ENCODE measurements at regions of chr2 and their contacts with region 1.

Region 1: DNA sequence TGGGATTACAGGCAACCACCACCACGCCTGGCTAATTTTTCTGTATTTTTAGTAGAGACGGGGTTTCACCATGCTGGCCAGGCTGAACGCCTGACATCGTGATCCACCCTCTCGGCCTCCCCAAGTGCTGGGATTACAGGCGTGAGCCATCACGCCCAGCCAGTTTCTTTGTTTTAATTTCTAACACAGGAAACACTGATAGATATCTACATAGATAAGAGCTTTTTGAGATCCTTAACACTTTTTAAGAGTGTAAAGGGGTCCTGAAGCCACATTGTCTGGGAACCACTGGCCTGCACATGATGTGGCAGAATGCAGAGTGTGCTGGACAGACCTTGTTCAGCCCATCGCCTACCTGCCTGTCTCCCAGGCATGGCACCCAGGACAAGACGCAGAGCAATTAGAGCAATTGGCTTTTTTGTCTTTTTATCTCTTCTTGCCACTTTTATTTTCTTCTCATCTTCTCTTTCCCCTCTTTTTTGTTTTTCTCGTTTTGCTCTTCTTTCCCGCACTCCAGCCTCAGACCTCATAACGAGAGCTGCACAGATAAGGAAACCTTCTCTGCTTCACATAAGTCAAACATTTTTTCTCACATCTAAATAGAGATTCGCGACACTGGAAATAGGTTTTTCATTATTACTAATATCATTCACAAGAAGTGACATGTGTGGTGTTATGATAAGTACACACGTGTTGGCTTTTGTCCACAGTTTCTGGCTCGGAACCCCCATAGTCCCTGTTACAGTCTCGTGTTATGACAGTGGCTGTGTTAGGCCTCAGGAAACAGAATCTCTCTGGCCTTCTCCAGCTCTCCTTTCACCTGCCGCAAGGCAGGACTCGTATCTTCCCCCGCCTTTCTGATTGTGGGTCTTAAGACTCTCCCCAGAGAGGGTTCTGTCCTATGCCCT is 25.2 kb upstream of the GPR55 start:
- DNase-seq: peak; percentile 58
- CTCF ChIP-seq: no peak

Region 2: DNA sequence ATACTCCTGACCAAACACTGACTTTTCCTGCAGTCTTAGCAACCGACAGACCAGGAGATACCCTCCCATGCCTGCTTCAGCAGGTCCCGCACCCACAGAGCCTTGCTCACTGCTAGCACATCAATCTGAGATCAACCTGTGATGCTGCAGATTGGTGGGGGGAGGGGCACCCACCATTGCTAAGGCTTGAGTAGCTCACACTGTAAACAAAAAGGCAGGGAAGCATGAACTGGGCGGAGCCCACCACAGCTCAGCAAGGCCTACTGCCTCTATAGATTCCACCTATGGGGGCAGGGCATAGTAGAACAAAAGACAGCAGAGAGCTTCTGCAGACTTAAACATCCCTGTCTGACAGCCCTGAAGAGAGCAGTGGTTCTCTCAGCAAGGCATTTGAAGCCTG is 424.5 kb before region 1 on chr2:
- CTCF ChIA-PET with region 1: no interaction called
- POLR2A ChIA-PET with region 1: no interaction called
- DNase-seq: no peak
- CTCF ChIP-seq: no peak

Region 3: DNA sequence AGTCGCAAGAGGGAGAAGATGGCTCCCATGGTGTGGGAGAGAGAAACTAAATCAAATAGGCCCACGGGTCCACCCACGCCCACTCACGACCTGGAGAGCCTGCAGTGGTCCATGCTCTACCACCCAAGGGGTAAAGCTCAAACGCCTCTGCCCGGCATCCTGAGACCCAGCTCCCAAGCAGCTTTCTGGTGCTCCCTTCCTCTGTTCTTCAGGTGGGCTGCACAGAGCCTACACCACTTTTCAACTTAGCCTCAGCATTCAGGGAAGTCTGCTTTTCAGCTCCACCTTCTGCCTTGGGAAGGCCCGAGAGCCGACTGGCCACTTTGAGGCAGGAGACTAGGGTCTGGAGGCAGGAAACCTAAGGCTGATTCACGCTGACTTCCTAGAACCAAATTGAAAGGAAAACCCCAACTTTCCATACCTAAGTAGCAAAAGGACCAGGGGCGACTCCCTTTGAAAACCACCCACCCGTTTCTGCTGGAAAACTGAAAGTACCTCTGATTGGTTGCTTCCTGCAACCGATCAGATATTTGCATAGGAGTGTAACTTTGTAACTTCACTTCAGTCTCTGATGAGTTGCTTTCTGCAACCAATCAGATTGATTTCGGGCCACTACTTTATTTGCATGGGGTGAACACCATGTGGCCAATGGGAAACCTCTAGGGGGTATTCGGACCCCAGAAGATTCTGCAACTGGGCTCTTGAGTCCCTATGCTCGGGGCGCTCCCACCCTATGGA is 18.9 kb after region 1 on chr2:
- CTCF ChIA-PET with region 1: interaction called, 10 read pairs
- POLR2A ChIA-PET with region 1: interaction called, 10 read pairs
- DNase-seq: no peak
- CTCF ChIP-seq: no peak

Measured in GM10248 (cell line).